ENCODE measurements at regions of chr2 and their contacts with region 1.

Region 1: DNA sequence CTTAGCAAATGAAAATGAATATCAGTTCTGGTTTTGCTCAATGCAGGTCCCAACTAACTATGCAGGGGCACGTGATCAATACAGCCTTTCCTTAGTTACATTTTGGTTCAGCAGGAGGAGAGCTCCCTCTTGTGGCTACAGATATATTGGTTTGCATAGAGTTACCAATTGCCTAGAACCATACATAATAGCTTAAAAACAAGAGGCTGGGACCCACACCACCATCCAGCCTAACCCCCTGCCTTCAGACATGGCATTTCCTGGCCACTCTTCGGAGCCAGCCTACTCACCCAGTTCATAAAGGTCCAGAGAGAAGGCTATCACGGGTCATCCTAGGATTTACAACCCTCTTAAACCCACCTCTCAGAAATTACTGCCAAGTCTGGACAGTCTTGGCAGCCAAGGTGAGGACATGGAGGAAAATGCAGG is 10.5 kb downstream of the CCDC93 start:
- DNase-seq: peak; percentile 48
- ATAC-seq: peak; percentile 99
- H3K4me3 ChIP-seq: no peak overlapping the region
- H3K27ac ChIP-seq: no peak overlapping the region
- H3K4me1 ChIP-seq: no peaks in the 10 kb centered on the region; the same call in 1 of the 2 replicates
- H3K27me3 ChIP-seq: no peaks in the 10 kb centered on the region
- CTCF ChIP-seq: peak; percentile 72 to 89 (median 88)
- EP300 ChIP-seq: no peak
- POLR2A ChIP-seq: no peak
- RAD21 ChIP-seq: peak; percentile 78

Region 2: DNA sequence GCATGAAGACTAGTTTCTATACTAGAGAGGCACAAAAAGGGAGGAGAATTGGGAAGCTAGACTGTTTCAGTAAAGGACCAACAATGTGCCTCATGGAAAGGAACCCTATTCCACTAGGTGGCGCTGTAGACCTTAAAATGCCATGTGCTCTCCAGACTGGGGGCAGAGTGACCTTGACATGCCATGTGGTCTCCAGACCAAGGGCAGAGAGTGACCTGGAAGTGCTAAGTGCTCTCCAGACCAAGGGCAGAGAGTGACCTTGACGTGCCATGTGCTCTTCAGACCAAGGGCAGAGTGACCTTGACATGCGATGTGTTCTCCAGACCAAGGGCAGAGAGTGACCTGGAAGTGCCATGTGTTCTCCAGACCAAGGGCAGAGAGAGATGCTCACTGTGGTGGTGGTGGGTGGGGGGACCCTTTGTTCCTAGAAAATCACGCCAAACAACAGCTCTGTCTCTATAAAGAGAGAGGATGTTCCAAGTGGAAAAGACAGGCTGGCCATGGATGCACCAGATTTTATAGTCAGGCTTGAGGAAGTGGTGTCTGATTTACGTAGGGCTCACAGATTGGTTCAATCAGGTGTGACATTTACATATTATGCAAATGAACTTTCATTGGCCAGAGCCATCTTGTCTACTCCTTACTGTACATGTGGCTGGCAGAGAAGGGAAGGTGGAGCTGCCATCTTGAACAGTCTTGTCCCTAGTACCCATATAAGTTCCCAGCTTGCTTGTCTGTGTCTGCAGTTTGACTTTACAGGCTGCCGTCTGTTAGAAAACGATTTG is 532.9 kb before region 1 on chr2:
- CTCF ChIA-PET with region 1: interaction called, 15 read pairs
- POLR2A ChIA-PET with region 1: no interaction called
- RAD21 ChIA-PET with region 1: interaction called, 4 read pairs
- SMC1A ChIA-PET with region 1: interaction called, 6 read pairs
- in situ Hi-C with region 1: no loop called
- intact Hi-C with region 1: loop called (anchors 5 kb)
- DNase-seq: no peak
- ATAC-seq: peak; percentile 73
- H3K4me3 ChIP-seq: no peak overlapping the region
- H3K27ac ChIP-seq: no peak overlapping the region
- H3K4me1 ChIP-seq: no peaks in the 10 kb centered on the region
- H3K27me3 ChIP-seq: no peaks in the 10 kb centered on the region
- CTCF ChIP-seq: peak; percentile 43 to 65 (median 55); a peak in 4 of 6 replicates
- EP300 ChIP-seq: no peak
- POLR2A ChIP-seq: no peak
- RAD21 ChIP-seq: peak; percentile 83

Region 3: DNA sequence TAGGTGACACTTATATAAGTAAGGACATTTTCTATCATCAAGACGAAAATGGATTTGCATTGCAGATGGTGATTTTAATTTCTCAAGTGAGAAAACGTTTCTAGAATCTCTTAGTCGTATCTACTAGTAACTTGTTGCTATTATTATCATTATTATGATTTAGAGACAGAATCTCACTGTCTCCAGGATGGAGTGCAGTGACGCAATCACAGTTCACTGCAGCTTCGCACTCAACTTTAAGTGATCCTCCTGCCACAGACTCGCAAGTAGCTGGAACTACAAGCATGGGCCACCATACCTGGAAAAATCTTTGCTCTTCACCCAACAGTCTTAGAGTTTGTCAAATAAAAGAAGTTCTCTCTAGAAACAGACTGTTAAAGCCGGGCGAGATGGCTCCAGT is 226.5 kb before region 1 on chr2:
- CTCF ChIA-PET with region 1: no interaction called
- POLR2A ChIA-PET with region 1: no interaction called
- RAD21 ChIA-PET with region 1: no interaction called
- SMC1A ChIA-PET with region 1: no interaction called
- in situ Hi-C with region 1: no loop called
- intact Hi-C with region 1: no loop called
- DNase-seq: no peak
- ATAC-seq: no peak
- H3K4me3 ChIP-seq: no peak overlapping the region
- H3K27ac ChIP-seq: no peak overlapping the region
- H3K4me1 ChIP-seq: no peaks in the 10 kb centered on the region
- H3K27me3 ChIP-seq: no peaks in the 10 kb centered on the region
- CTCF ChIP-seq: no peak
- EP300 ChIP-seq: no peak
- POLR2A ChIP-seq: no peak
- RAD21 ChIP-seq: no peak

Region 4: DNA sequence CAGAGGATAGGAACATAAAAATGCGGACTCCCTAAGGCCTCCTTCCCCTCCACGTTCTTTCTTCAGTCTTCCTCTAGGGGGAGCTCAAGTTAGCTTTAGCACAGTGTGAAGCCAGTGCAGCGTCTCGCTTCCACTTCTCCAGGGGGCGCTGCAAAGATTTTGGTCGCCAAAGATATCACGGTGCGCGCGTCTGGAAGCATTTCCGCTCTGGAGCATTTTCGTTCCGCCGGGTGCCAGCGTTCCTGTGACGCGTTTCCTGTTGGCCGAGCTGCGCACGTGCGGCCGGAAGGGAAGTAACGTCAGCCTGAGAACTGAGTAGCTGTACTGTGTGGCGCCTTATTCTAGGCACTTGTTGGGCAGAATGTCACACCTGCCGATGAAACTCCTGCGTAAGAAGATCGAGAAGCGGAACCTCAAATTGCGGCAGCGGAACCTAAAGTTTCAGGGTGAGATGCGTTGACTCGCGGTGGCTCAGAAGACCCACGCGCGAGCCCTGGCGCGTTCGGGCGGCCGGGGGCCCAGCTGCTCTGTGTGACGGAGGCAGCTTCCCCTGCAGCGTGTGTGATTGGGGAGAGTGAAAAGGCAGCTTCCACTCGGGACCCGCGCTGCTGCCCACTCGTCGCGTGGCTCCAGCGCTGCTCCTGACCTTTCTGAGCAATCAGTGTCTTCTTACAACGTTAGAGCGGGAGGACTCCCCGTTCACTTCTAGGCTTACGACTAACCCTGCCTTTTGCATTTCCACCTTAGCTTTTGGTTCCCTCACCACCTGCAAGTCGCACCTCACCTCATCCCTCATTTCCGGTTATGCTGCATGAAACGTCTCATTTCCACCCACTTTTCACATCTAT is 188.8 kb before region 1 on chr2 and contains the start of gene DDX18:
- CTCF ChIA-PET with region 1: interaction called, 123 read pairs
- POLR2A ChIA-PET with region 1: interaction called, 6 read pairs
- RAD21 ChIA-PET with region 1: interaction called, 40 read pairs
- SMC1A ChIA-PET with region 1: interaction called, 51 read pairs
- in situ Hi-C with region 1: loop called (anchors 5 kb)
- intact Hi-C with region 1: loop called (anchors 1 kb)
- DNase-seq: peak; percentile 93
- ATAC-seq: peak; percentile 88
- H3K4me3 ChIP-seq: peak within 1 kb of the TSS; percentile 90
- H3K27ac ChIP-seq: peak within 1 kb of the TSS; percentile 87
- H3K4me1 ChIP-seq: peaks cover 9% of the 10 kb centered on the region; the same call in 1 of the 2 replicates
- H3K27me3 ChIP-seq: no peaks in the 10 kb centered on the region
- CTCF ChIP-seq: peak; percentile 98 to 100 (median 100); a peak in 5 of 6 replicates
- EP300 ChIP-seq: peak in 1 of 2 experiments; percentile 42; a peak in 2 of 4 replicates
- POLR2A ChIP-seq: peak; percentile 90
- RAD21 ChIP-seq: peak; percentile 66
- polyA plus RNA-seq, gene DDX18: 54.3 to 60.3 TPM

Region 5: GRCh38 chr2:117958186-117958585 is 45.2 kb before region 1 on chr2:
- CTCF ChIA-PET with region 1: interaction called, 25 read pairs
- POLR2A ChIA-PET with region 1: no interaction called
- RAD21 ChIA-PET with region 1: interaction called, 7 read pairs
- SMC1A ChIA-PET with region 1: interaction called, 8 read pairs
- in situ Hi-C with region 1: no loop called
- intact Hi-C with region 1: no loop called
- DNase-seq: no peak
- ATAC-seq: no peak
- H3K4me3 ChIP-seq: no peak overlapping the region
- H3K27ac ChIP-seq: no peak overlapping the region
- H3K4me1 ChIP-seq: no peaks in the 10 kb centered on the region
- H3K27me3 ChIP-seq: no peaks in the 10 kb centered on the region
- CTCF ChIP-seq: no peak
- EP300 ChIP-seq: no peak
- POLR2A ChIP-seq: no peak
- RAD21 ChIP-seq: no peak

Region 6: DNA sequence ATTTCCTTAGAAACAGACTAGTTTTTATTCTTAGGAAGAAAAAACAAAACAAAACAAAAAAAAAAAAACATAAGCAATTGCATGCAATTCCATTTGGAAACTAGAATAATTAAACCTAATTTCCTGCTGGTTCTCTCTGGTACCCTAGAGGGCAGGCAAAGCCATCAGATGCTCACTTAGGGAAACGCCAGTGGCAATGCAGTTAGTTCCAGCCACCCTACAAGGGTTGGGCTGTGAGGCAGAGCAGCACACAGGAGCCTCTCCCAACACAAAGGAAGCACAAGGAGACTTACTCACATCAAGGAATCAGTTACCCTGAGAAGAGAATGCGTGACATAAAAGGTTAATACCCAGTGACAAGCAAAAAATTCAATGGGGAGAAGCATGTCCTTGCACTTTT is 18.3 kb before region 1 on chr2:
- CTCF ChIA-PET with region 1: interaction called, 92 read pairs
- POLR2A ChIA-PET with region 1: no interaction called
- RAD21 ChIA-PET with region 1: no interaction called
- SMC1A ChIA-PET with region 1: interaction called, 21 read pairs
- in situ Hi-C with region 1: no loop called
- intact Hi-C with region 1: no loop called
- DNase-seq: no peak
- ATAC-seq: no peak
- H3K4me3 ChIP-seq: no peak overlapping the region
- H3K27ac ChIP-seq: no peak overlapping the region
- H3K4me1 ChIP-seq: no peaks in the 10 kb centered on the region
- H3K27me3 ChIP-seq: no peaks in the 10 kb centered on the region
- CTCF ChIP-seq: no peak
- EP300 ChIP-seq: no peak
- POLR2A ChIP-seq: no peak
- RAD21 ChIP-seq: no peak

Region 7: GRCh38 chr2:118061135-118061955 is 57.9 kb after region 1 on chr2:
- CTCF ChIA-PET with region 1: interaction called, 16 read pairs
- POLR2A ChIA-PET with region 1: no interaction called
- RAD21 ChIA-PET with region 1: interaction called, 5 read pairs
- SMC1A ChIA-PET with region 1: interaction called, 18 read pairs
- in situ Hi-C with region 1: no loop called
- intact Hi-C with region 1: no loop called
- DNase-seq: peak; percentile 57
- ATAC-seq: peak; percentile 87
- H3K4me3 ChIP-seq: no peak overlapping the region
- H3K27ac ChIP-seq: no peak overlapping the region
- H3K4me1 ChIP-seq: peaks cover 27% of the 10 kb centered on the region
- H3K27me3 ChIP-seq: no peaks in the 10 kb centered on the region
- CTCF ChIP-seq: peak; percentile 67 to 76 (median 68)
- EP300 ChIP-seq: no peak
- POLR2A ChIP-seq: no peak
- RAD21 ChIP-seq: peak; percentile 98

Region 8: GRCh38 chr2:118165595-118165994 is 162.2 kb after region 1 on chr2:
- CTCF ChIA-PET with region 1: no interaction called
- POLR2A ChIA-PET with region 1: no interaction called
- RAD21 ChIA-PET with region 1: no interaction called
- SMC1A ChIA-PET with region 1: no interaction called
- in situ Hi-C with region 1: no loop called
- intact Hi-C with region 1: no loop called
- DNase-seq: no peak
- ATAC-seq: no peak
- H3K4me3 ChIP-seq: no peak overlapping the region
- H3K27ac ChIP-seq: no peak overlapping the region
- H3K4me1 ChIP-seq: no peaks in the 10 kb centered on the region
- H3K27me3 ChIP-seq: no peaks in the 10 kb centered on the region
- CTCF ChIP-seq: no peak
- EP300 ChIP-seq: no peak
- POLR2A ChIP-seq: no peak
- RAD21 ChIP-seq: no peak

Region 9: GRCh38 chr2:118255771-118256372 is 252.5 kb after region 1 on chr2:
- CTCF ChIA-PET with region 1: no interaction called
- POLR2A ChIA-PET with region 1: no interaction called
- RAD21 ChIA-PET with region 1: no interaction called
- SMC1A ChIA-PET with region 1: no interaction called
- in situ Hi-C with region 1: no loop called
- intact Hi-C with region 1: no loop called
- DNase-seq: no peak
- ATAC-seq: no peak
- H3K4me3 ChIP-seq: no peak overlapping the region
- H3K27ac ChIP-seq: no peak overlapping the region
- H3K4me1 ChIP-seq: no peaks in the 10 kb centered on the region
- H3K27me3 ChIP-seq: no peaks in the 10 kb centered on the region
- CTCF ChIP-seq: no peak
- EP300 ChIP-seq: no peak
- POLR2A ChIP-seq: no peak
- RAD21 ChIP-seq: no peak